Tibial artery (tissue), 4 donors: ENCODE measurements at regions of chr10 and their contacts with region 1.

Region 1: DNA sequence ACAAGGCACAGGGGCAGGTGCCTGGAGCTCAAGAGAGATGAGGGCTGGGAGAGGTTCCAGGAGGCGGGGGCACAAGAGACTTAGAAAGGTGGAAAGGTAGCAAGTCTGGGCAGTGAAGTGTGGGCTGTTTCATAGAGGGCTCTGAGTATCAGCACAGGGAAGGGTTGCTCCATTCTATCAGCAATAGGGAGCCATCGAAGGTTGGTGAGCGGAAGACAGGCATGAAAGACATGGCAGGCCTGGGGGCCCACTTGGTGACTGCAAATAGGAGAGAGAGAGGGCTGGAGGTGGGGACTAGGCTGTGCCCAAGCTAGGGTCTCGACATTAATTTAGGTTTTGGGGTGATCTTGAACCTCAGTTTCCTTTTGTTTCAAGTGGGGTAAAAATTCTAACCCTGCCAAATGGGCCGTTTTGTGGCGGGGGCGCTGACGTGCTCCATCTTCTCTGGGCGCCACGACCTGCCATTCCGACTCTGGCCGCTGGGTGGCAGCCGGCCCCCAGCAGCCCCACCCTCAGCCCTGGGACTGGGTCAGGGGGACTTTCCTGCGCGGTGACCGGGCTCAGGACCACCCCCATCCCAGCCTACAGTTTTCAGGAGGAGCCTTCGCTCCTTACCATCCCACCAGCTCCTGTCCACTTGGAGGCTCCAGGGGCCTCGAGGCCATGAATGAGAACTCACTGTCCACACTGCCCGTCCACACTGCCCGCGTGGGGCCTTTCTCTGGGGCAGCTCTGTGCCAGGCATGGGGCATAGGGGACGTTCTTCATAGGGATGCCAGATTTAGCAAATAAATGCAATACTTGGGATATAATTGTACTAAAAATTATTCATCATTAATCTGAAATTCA is 37.2 kb upstream of the PCBD1 start:
- DNase-seq: peak; percentile 36 to 72
- H3K4me3 ChIP-seq: no peak overlapping the region
- H3K27ac ChIP-seq: no peak overlapping the region
- H3K4me1 ChIP-seq: peaks cover 0 to 4% (median 0%) of the 10 kb centered on the region in 4 donors
- H3K27me3 ChIP-seq: peaks cover 0 to 18% of the 10 kb centered on the region in 2 donors
- CTCF ChIP-seq: peak; percentile 92 to 95

Region 2: DNA sequence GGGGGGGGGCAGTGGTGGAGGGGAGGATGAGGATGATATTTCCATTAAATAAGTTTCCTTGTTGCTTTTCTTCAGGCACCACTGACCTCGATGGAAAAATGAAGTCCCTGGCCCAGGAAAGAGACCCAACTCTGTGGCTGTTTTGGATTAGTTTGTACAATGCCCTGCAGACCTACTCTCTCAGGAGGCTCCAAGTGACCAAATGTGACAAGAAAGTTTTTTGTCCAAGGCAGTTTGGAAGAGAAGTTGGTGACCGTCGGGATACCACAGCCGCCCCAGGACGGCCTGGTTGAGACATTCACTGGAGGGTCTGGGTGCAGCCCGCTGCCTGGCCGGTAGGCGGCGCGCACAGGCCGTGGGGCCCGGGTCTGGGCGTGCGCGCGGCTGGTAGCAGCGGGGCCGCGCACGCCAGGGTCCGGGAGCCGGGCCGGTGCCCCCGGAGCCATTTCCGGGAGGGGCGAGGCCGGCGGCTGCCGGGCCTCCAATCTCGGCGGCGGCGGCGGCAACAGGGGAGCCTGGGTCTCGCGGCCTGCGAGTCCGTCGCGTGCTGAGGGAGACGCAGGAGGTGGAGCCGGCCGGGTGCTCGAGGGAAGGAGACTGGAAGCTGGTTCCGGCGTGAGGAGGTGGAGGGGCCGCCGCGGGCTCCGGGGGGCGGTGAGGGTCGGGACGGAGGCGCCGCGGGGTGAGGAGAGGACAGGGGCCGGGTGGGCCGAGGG is 109.9 kb before region 1 on chr10 and contains the start of gene SGPL1:
- intact Hi-C with region 1: no loop called
- DNase-seq: peak; percentile 84 to 90
- H3K4me3 ChIP-seq: peak within 1 kb of the TSS; percentile 80 to 81
- H3K27ac ChIP-seq: peak within 1 kb of the TSS; percentile 87 to 93
- H3K4me1 ChIP-seq: peaks cover 0 to 16% (median 8%) of the 10 kb centered on the region in 4 donors
- H3K27me3 ChIP-seq: no peaks in the 10 kb centered on the region
- CTCF ChIP-seq: peak; percentile 94 to 99

Region 3: DNA sequence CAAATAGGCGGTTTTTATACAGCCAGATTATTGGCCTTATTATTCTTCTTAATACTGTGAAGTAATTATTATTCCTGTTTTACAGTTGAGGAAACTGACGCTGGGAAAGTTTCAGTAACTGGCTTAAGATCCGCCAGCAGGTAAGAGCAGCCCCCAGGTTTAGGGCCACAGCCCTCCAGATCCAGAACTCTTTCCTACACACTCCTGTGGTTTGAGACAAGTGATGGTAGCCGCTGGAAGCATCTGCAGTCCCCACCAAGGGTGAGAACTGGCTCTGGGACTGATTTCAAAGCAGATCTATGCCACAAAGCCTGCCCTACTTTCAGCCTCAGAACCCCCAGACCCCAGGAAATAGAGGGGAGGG is 283.7 kb after region 1 on chr10:
- intact Hi-C with region 1: loop called (anchors 5 kb)
- DNase-seq: peak in 1 of 2 donors; percentile 25
- H3K4me3 ChIP-seq: no peak overlapping the region
- H3K27ac ChIP-seq: no peak overlapping the region
- H3K4me1 ChIP-seq: peaks cover 0 to 33% (median 14%) of the 10 kb centered on the region in 4 donors
- H3K27me3 ChIP-seq: peaks cover 0 to 20% of the 10 kb centered on the region in 2 donors
- CTCF ChIP-seq: no peak

Region 4: GRCh38 chr10:71285180-71285545 is 359.6 kb after region 1 on chr10:
- intact Hi-C with region 1: loop called (anchors 2 kb)
- DNase-seq: no peak
- H3K4me3 ChIP-seq: no peak overlapping the region
- H3K27ac ChIP-seq: no peak overlapping the region
- H3K4me1 ChIP-seq: no peaks in the 10 kb centered on the region
- H3K27me3 ChIP-seq: no peaks in the 10 kb centered on the region
- CTCF ChIP-seq: peak; percentile 74 to 81

Region 5: DNA sequence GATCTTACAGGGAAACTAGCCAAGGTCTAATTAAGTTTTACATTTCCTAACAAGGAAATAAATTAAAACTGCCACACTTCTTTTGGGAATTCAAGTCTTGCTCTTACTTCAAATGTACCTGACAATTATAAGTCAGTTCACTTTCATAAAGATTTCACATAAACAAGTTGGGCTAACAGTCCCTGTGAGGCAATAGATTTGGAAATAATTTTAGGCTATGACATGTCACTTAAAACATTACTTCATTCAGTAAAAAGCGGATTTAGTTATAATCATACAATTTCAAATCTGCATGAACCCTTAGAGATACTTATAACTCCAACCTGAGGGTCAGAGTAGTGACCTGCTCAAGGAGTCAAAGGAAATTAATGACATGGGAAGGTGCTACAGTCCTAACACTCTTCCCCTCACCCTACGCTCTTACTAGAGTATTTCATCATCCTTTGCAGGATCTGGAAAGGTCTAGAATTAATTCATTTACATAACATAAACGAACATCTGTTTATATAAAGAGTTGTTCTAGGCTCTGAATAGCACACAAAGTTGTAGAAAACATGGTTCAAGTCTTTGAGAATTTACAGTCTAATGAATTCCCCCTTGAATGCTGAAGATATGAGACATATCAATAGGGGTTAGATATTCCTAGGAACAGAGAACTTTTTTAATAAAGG is 1461.5 kb after region 1 on chr10:
- intact Hi-C with region 1: no loop called
- DNase-seq: no peak
- H3K4me3 ChIP-seq: no peak overlapping the region
- H3K27ac ChIP-seq: no peak overlapping the region
- H3K4me1 ChIP-seq: no peaks in the 10 kb centered on the region
- H3K27me3 ChIP-seq: no peaks in the 10 kb centered on the region
- CTCF ChIP-seq: no peak